OCI-LY7 (cell line): ENCODE measurements at regions of chr6 and their contacts with region 1.

Region 1: DNA sequence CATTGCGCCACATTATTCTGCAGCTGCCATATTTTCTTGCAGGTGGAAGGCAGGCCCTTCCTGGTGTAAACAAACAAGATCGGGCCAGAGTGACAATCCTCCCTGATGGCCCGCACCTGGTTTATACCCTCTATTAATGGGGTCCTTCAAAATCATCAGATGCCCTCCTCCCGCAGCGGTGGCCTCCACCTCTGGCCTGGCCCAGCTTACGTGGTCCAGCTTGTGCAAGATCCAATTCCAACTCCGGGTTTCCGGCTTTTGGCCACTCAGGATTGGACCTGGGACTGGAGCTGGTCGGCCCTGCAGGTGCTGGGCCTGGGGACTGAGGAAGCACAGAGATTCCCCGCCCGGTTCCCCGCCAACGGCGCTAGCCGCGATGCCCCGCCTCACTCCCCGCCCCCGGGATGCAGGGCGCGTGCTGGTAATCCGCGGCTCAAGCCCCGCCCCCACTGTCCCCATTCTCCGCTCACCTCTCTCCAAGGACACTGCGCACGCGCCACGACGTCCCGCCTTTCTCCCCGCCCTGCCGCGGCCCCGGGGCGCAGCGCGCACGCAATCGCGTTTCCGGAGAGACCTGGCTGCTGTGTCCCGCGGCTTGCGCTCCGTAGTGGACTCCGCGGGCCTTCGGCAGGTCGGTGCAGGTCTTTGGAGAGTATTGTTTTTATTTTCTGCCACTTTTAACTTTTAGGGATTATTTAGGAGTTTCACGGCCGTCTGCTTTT is at the start of gene TMEM14B:
- DNase-seq: peak; percentile 98
- H3K4me3 ChIP-seq: peak within 1 kb of the TSS; percentile 77
- H3K27ac ChIP-seq: peak within 1 kb of the TSS; percentile 44
- H3K4me1 ChIP-seq: peaks cover 27% of the 10 kb centered on the region
- CTCF ChIP-seq: no peak
- total RNA-seq, gene TMEM14B: 93.2 and 103 TPM in 2 replicates

Region 2: GRCh38 chr6:10510592-10511367 is 236.6 kb before region 1 on chr6:
- CTCF ChIA-PET with region 1: no interaction called
- POLR2A ChIA-PET with region 1: interaction called, 3 read pairs
- intact Hi-C with region 1: loop called (anchors 5 kb)
- DNase-seq: peak; percentile 82
- H3K4me3 ChIP-seq: peak overlapping the region; percentile 11
- H3K27ac ChIP-seq: no peak overlapping the region
- H3K4me1 ChIP-seq: peaks cover 17% of the 10 kb centered on the region
- CTCF ChIP-seq: peak; percentile 96

Region 3: DNA sequence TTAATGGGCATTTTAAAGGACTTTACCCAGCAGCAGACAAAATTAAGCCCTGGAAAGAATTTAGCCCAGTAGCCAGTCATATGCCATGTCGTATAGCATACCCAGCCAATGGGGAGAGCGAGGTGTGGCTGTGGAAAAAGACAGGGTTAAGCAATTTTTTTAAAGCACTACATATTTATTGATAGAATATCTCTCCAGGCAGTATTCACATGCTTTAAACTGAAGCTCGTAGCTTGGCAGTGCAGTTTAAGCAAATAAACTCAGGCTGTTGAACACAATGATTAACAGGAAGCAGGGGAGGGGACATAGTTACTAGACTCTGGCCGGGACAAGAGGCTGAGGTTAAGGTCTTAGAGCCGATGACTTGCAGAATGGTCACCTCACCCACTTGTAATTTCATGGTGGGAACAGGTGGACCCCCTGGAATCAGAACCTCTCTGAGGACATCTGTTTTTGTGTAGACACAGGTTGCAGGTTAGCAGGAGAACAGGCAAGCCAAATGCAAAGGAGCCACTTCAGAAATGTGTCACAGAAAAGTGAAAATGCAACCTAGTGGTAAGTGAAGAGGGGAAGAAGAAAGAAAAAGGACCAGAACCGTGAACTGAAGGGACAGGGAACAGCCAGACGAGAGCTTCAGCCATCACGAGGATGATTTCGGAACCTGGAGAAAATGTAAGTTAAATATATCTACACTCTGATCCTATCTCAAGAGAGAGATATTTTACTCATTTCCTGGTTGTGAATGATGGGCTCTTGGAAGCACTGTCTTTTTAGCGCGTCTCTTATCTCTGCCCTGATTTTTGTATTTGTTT is 219.0 kb before region 1 on chr6:
- CTCF ChIA-PET with region 1: no interaction called
- POLR2A ChIA-PET with region 1: interaction called, 7 read pairs
- intact Hi-C with region 1: loop called (anchors 1 kb)
- DNase-seq: peak; percentile 65
- H3K4me3 ChIP-seq: peak overlapping the region; percentile 89
- H3K27ac ChIP-seq: peak overlapping the region; percentile 95
- H3K4me1 ChIP-seq: peaks cover 29% of the 10 kb centered on the region
- CTCF ChIP-seq: peak; percentile 33; the same call in 1 of the 2 replicates

Region 4: DNA sequence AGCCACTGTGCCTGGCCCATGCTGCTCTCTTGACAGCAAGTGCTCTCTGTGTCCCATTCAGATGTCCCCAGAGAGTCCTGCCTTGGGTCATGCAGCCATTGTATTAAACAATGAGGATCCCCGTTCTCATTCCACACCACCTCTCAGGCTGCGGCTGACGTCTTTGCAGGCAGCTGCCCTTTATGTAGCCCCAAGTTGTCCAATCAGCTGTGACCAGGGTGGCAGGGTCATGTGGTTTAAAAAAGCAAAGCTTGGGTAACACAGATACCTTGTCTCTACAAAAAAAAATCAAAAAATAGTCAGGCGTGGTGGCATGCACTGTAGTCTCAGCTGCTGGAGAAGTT is 213.0 kb before region 1 on chr6:
- CTCF ChIA-PET with region 1: no interaction called
- POLR2A ChIA-PET with region 1: interaction called, 7 read pairs
- intact Hi-C with region 1: loop called (anchors 1 kb)
- DNase-seq: peak; percentile 87
- H3K4me3 ChIP-seq: peak overlapping the region; percentile 89
- H3K27ac ChIP-seq: peak overlapping the region; percentile 95
- H3K4me1 ChIP-seq: peaks cover 71% of the 10 kb centered on the region
- CTCF ChIP-seq: no peak

Region 5: GRCh38 chr6:10694302-10695085 is 52.9 kb before region 1 on chr6 and contains the starts of genes C6orf52 and PAK1IP1:
- CTCF ChIA-PET with region 1: no interaction called
- POLR2A ChIA-PET with region 1: interaction called, 16 read pairs
- intact Hi-C with region 1: loop called (anchors 1 kb)
- DNase-seq: peak; percentile 97
- H3K4me3 ChIP-seq: peak within 1 kb of the TSS; percentile 92
- H3K27ac ChIP-seq: peak within 1 kb of the TSS; percentile 84
- H3K4me1 ChIP-seq: peaks cover 15% of the 10 kb centered on the region
- CTCF ChIP-seq: no peak
- total RNA-seq, gene C6orf52: 0.66 TPM in 1 of 2 replicates, not detected in the other
- total RNA-seq, gene PAK1IP1: 27.8 and 29.7 TPM in 2 replicates

Region 6: GRCh38 chr6:10722820-10723566 is 24.4 kb before region 1 on chr6 and contains the start of gene TMEM14C:
- CTCF ChIA-PET with region 1: no interaction called
- POLR2A ChIA-PET with region 1: interaction called, 20 read pairs
- intact Hi-C with region 1: loop called (anchors 1 kb)
- DNase-seq: peak; percentile 87
- H3K4me3 ChIP-seq: peak within 1 kb of the TSS; percentile 72
- H3K27ac ChIP-seq: peak within 1 kb of the TSS; percentile 38
- H3K4me1 ChIP-seq: peaks cover 27% of the 10 kb centered on the region
- CTCF ChIP-seq: no peak
- total RNA-seq, gene TMEM14C: 23.7 and 40.2 TPM in 2 replicates

Region 7: DNA sequence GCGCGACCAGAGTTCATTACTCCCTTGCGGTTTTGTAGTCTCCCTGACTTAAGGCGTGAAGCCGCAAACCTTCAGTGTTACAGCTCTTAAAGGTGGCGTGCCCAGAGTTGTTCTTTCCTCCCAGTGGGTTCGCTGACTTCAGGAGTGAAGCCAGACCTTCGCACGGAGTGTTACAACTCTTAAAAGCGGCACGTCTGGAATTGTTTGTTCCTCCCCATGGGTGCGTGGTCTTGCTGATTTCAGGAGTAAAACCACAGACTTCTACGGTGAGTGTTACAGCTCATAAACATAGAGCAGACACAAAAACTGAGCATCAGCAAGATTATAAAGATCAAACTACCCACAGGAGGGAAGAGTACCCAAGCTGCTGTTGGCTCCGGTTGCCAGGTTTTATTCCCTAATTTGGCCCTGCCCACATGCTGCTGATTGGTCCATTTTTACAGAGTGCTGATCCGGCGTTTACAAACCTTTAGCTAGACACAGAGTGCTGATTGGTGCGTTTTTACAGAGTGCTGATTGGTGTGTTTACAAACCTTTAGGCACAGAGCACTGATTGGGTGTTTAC is 14.2 kb before region 1 on chr6:
- CTCF ChIA-PET with region 1: no interaction called
- POLR2A ChIA-PET with region 1: interaction called, 22 read pairs
- intact Hi-C with region 1: no loop called
- DNase-seq: no peak
- H3K4me3 ChIP-seq: no peak overlapping the region
- H3K27ac ChIP-seq: no peak overlapping the region
- H3K4me1 ChIP-seq: no peaks in the 10 kb centered on the region
- CTCF ChIP-seq: no peak